Dendritic cell treated with granulocyte-macrophage colony-stimulating factor and Interleukin-4, amounts not matched to agents 40 ng/mL and 50 ng/mL, for 4 days (primary cell): ENCODE measurements at regions of chrX and their contacts with region 1.

Region 1: DNA sequence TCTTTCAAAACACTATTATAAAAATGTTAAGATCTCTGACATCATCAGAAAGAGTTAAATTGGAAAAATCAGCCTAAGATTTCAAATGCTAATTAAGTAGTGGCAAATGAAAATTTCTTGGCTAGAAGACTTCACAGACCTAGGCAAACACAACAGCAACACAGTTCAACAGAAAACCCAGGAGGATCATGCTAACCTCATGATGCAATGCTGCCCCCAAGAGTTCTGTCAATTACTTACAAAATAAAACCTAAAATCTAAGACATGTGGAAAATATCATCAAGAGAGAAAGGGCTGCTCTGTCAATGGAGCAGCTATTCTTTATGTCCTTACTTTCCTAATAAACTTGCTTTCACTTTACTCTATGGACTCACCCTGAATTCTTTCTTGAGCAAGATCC is 21.0 kb downstream of the S100G start:
- H3K4me3 Mint-ChIP-seq: no peak overlapping the region
- H3K27ac Mint-ChIP-seq: no peak overlapping the region
- H3K4me1 Mint-ChIP-seq: no peaks in the 10 kb centered on the region
- H3K27me3 Mint-ChIP-seq: no peaks in the 10 kb centered on the region

Region 2: DNA sequence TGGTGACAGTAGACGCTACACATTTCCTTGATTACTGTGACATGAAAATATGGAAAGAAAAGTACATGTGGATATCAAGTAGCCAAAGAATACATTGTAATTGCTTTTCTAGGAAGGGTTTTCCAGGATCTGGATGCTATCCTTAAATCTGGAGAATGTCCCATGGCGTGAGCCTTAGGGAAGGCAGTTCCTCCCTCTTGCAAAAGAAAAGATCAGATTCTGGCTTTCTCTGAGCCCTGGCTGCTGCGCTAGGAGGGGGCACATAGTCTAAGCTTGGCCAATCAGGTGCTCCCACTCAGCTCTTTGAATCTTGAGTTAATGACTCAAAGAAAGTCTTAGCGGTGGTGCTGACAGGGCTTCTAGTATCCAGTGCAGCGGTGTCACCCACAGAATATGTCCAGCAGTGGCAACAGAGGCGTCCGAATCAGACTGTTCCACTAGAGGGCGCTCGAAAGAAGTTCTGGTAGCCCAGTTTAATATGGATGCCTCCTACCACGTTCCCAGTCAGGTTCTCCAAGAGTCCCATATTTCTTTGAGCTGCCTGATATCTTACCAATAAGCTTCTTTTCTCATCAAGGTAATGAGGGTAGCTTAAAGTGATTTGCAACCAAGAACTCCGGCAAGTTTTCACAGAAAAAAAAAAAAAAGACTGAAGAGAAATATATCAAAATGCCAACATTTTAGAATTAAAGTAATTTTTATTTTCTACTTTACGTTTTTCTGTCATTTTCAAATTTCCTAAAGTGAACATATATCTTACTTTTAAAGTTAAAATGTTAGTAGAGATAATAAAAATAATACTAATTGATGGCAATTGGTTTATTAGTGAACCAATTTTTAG is 234.4 kb before region 1 on chrX:
- intact Hi-C with region 1: loop called (anchors 2 kb)
- H3K4me3 Mint-ChIP-seq: no peak overlapping the region
- H3K27ac Mint-ChIP-seq: no peak overlapping the region
- H3K4me1 Mint-ChIP-seq: no peaks in the 10 kb centered on the region
- H3K27me3 Mint-ChIP-seq: no peaks in the 10 kb centered on the region

Region 3: GRCh38 chrX:16658284-16658683 is 12.7 kb before region 1 on chrX:
- intact Hi-C with region 1: no loop called
- H3K4me3 Mint-ChIP-seq: no peak overlapping the region
- H3K27ac Mint-ChIP-seq: no peak overlapping the region
- H3K4me1 Mint-ChIP-seq: no peaks in the 10 kb centered on the region
- H3K27me3 Mint-ChIP-seq: no peaks in the 10 kb centered on the region